ENCODE measurements at regions of chr20 and their contacts with region 1.

Region 1: DNA sequence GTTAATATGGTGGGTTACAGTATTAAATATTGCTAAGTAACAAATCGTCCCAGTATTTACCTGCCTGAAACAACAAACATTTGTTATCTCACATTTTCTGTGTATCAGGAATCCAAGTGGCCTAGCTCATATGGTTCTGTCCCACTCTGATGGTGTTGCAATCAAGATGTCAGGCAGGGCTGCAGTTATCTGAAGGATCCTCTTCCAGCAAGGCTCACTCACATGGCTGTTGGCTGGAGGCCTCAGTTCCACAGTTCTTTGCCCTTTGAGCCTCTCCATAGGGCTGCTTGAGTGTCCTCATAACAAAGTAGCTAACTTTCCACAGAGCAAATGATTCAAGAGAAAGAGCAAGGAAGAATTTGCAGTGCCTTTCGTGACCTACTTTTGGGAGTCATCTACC is 17.7 kb downstream of the RAB22A start:
- DNase-seq: no peak
- H3K4me3 ChIP-seq: no peak overlapping the region
- H3K27ac ChIP-seq: no peak overlapping the region
- H3K4me1 ChIP-seq: peaks cover 0 to 53% (median 30%) of the 10 kb centered on the region in 4 donors
- H3K27me3 ChIP-seq: no peaks in the 10 kb centered on the region
- CTCF ChIP-seq: no peak
- EP300 ChIP-seq: no peak
- POLR2A ChIP-seq: no peak

Region 2: DNA sequence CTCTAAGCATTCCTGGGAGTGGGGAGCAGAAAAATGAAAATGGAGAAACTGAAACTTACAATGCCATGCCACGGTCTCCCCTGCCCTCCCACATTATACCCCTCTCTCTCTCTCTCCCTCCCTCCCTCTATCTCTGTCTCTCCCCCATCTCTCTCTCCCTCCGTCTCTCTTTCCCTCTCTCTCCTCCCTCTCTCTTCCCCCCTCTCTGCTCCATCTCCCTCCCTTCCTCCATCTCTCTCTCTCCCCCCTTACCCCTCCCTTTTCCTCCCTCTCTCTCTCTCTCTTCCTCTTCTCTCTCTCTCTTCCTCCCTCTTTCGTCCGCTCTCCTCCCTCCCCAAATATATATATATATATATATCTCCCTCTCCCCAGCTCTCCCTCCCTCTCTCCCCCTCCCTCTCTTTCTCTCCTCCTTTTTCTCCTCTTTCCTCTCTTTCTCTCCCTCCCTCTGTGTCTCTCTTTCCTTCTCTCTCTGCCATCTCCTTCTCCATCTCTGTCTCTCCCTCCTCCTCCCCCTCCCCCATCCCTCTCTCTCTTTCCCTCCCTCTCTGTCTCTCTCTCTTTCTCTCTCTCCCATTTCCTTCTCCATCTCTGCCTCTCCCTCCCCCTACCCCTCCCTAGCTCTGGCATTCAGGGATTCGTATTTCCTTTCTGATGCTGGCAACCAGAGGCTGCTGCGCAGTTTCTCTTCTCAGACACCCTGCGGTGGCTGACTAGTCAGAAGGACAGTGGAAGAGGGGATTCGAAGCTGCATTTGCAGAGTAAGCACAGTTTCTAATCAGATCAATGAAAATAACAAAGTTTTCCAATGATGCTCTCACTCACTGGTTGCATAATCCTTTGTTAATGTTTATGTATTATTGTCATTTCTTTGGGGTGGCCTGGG is 47.9 kb after region 1 on chr20:
- intact Hi-C with region 1: loop called (anchors 10 kb)
- DNase-seq: peak in 1 of 2 donors; percentile 61
- H3K4me3 ChIP-seq: no peak overlapping the region
- H3K27ac ChIP-seq: no peak overlapping the region
- H3K4me1 ChIP-seq: no peaks in the 10 kb centered on the region
- H3K27me3 ChIP-seq: peaks cover 0 to 18% (median 0%) of the 10 kb centered on the region in 3 donors
- CTCF ChIP-seq: no peak
- EP300 ChIP-seq: no peak
- POLR2A ChIP-seq: no peak